Endothelial cell of umbilical vein (primary cell): ENCODE measurements at regions of chr2 and their contacts with region 1.

Region 1: DNA sequence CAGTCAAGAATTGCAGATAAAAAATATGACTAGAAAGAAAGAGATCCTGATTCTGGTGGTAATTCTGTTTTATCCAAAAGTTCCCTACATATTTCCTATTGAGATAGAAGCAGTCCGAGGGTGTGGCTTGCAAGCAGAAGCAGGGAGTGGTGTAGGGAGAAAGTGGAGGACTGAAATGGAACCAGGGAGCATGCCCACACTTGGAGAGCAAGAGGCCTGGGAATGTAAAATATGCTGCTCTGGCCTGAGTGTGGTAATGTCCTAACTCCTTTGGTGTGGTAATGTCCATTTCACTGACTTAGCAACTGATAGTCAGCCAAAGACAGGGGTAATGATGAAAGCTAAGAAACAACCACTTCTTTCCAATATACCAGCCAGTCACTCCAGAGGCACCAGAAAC is 30.1 kb upstream of the FMNL2 start:
- DNase-seq: no peak
- H3K4me3 ChIP-seq: no peak overlapping the region
- H3K27ac ChIP-seq: no peak overlapping the region
- H3K4me1 ChIP-seq: peaks cover 8% of the 10 kb centered on the region
- H3K27me3 ChIP-seq: peaks cover 3 to 5% of the 10 kb centered on the region in 2 experiments
- CTCF ChIP-seq: no peak
- POLR2A ChIP-seq: no peak

Region 2: GRCh38 chr2:152200562-152201465 is 104.0 kb before region 1 on chr2:
- CTCF ChIA-PET with region 1: interaction called, 4 read pairs
- POLR2A ChIA-PET with region 1: no interaction called
- dilution Hi-C with region 1: no loop called
- intact Hi-C with region 1: loop called (anchors 2 kb)
- DNase-seq: peak; percentile 97
- H3K4me3 ChIP-seq: peak overlapping the region in 1 of 3 experiments; percentile 9
- H3K27ac ChIP-seq: peak overlapping the region; percentile 69
- H3K4me1 ChIP-seq: peaks cover 15% of the 10 kb centered on the region
- H3K27me3 ChIP-seq: no peaks in the 10 kb centered on the region
- CTCF ChIP-seq: no peak
- POLR2A ChIP-seq: peak; percentile 76